CD8-positive, alpha-beta T cell (primary cell): ENCODE measurements at regions of chr7 and their contacts with region 1.

Region 1: GRCh38 chr7:23105644-23106056 is at the start of gene KLHL7:
- DNase-seq: peak; percentile 92 to 98 (median 96)
- ATAC-seq: peak; percentile 95
- H3K4me3 ChIP-seq: peak within 1 kb of the TSS; percentile 93 to 94
- H3K4me3 Mint-ChIP-seq: peak within 1 kb of the TSS; percentile 98
- H3K27ac ChIP-seq: peak within 1 kb of the TSS; percentile 97
- H3K27ac Mint-ChIP-seq: peak within 1 kb of the TSS; percentile 95
- H3K4me1 ChIP-seq: peaks cover 23% of the 10 kb centered on the region
- H3K4me1 Mint-ChIP-seq: peaks cover 49% of the 10 kb centered on the region
- H3K27me3 ChIP-seq: no peaks in the 10 kb centered on the region
- H3K27me3 Mint-ChIP-seq: no peaks in the 10 kb centered on the region
- CTCF ChIP-seq: no peak
- total RNA-seq, gene KLHL7: 19.2 to 20.2 TPM

Region 2: GRCh38 chr7:22822486-22823141 is 283.0 kb before region 1 on chr7 and contains the start of gene TOMM7:
- CTCF ChIA-PET with region 1: interaction called, 3 read pairs
- POLR2A ChIA-PET with region 1: interaction called, 3 read pairs
- intact Hi-C with region 1: loop called (anchors 1 to 2 kb)
- DNase-seq: peak; percentile 72 to 99 (median 86)
- ATAC-seq: peak; percentile 96
- H3K4me3 ChIP-seq: peak within 1 kb of the TSS; percentile 74 to 89
- H3K4me3 Mint-ChIP-seq: peak within 1 kb of the TSS; percentile 99
- H3K27ac ChIP-seq: peak within 1 kb of the TSS; percentile 85
- H3K27ac Mint-ChIP-seq: peak within 1 kb of the TSS; percentile 99
- H3K4me1 ChIP-seq: peaks cover 20% of the 10 kb centered on the region
- H3K4me1 Mint-ChIP-seq: peaks cover 41% of the 10 kb centered on the region
- H3K27me3 ChIP-seq: no peaks in the 10 kb centered on the region
- H3K27me3 Mint-ChIP-seq: peaks cover 4% of the 10 kb centered on the region
- CTCF ChIP-seq: no peak
- total RNA-seq, gene TOMM7: 595 to 610 TPM

Region 3: DNA sequence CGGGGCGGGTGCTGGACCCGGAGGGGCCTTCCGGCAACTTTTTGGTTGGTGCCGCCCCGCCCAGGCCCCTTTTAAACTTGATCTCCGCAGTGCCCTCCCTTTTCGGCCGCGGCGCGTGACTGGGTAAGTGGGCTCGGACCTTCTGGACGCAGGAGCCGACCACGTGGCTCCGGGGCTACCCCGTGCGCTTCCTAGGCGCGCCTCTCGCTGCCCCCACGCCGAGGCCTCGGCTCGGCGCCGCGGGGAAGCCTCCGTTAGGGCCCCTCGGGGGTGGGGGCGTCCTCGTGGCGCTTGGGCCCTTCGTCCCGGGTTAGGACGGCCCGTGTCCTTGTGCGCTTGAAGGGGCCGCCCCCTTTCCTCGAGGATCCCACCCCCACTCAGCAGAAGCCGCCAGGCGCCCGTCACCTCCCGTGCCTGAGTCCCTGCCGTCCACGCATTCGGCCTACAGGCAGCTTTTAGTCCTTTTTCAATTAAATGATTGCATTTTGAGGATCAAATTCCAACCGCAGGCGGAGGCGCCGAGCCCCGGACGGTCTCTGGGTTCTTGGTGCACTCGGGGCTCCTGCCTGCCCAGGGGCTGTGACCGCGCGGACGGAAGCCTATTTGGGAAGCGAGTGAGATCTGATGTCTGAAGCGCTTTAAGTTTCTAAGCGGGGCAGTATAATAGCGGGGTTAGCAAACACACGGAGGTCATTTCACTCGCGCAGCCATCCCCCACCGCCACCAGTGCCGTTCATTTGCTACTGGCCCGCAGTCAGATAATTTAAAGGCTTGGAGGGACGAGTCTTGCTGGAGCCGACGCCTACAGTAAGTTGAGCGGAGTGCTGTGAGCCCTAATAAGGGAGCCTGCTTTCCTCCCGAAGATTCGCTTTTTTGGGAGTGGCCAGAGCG is 251.2 kb before region 1 on chr7:
- CTCF ChIA-PET with region 1: no interaction called
- POLR2A ChIA-PET with region 1: interaction called, 3 read pairs
- intact Hi-C with region 1: loop called (anchors 1 to 2 kb)
- DNase-seq: peak in 8 of 9 experiments; percentile 58 to 89 (median 76)
- ATAC-seq: peak; percentile 79
- H3K4me3 ChIP-seq: peak overlapping the region; percentile 82 to 94
- H3K4me3 Mint-ChIP-seq: peak overlapping the region; percentile 93
- H3K27ac ChIP-seq: peak overlapping the region; percentile 64 to 81
- H3K27ac Mint-ChIP-seq: peak overlapping the region; percentile 93
- H3K4me1 ChIP-seq: peaks cover 11% of the 10 kb centered on the region
- H3K4me1 Mint-ChIP-seq: peaks cover 23% of the 10 kb centered on the region
- H3K27me3 ChIP-seq: no peaks in the 10 kb centered on the region
- H3K27me3 Mint-ChIP-seq: no peaks in the 10 kb centered on the region
- CTCF ChIP-seq: peak; percentile 65

Region 4: GRCh38 chr7:23181684-23182553 is 76.3 kb after region 1 on chr7 and contains the start of gene NUP42:
- CTCF ChIA-PET with region 1: interaction called, 5 read pairs
- POLR2A ChIA-PET with region 1: interaction called, 23 read pairs
- intact Hi-C with region 1: loop called (anchors 1 kb)
- DNase-seq: peak; percentile 89 to 98 (median 95)
- ATAC-seq: peak; percentile 90
- H3K4me3 ChIP-seq: peak within 1 kb of the TSS; percentile 77 to 84
- H3K4me3 Mint-ChIP-seq: peak within 1 kb of the TSS; percentile 100
- H3K27ac ChIP-seq: peak within 1 kb of the TSS; percentile 86 to 91
- H3K27ac Mint-ChIP-seq: peak within 1 kb of the TSS; percentile 100
- H3K4me1 ChIP-seq: peaks cover 30% of the 10 kb centered on the region
- H3K4me1 Mint-ChIP-seq: peaks cover 39% of the 10 kb centered on the region
- H3K27me3 ChIP-seq: no peaks in the 10 kb centered on the region
- H3K27me3 Mint-ChIP-seq: no peaks in the 10 kb centered on the region
- CTCF ChIP-seq: no peak
- total RNA-seq, gene NUP42: 17.3 to 20.4 TPM

Region 5: GRCh38 chr7:23261843-23262452 is 156.3 kb after region 1 on chr7:
- CTCF ChIA-PET with region 1: no interaction called
- POLR2A ChIA-PET with region 1: no interaction called
- intact Hi-C with region 1: loop called in 1 of 2 experiments (anchors 10 kb)
- DNase-seq: peak; percentile 19 to 74 (median 54)
- ATAC-seq: peak; percentile 97
- H3K4me3 ChIP-seq: no peak overlapping the region
- H3K4me3 Mint-ChIP-seq: no peak overlapping the region
- H3K27ac ChIP-seq: no peak overlapping the region
- H3K27ac Mint-ChIP-seq: no peak overlapping the region
- H3K4me1 ChIP-seq: no peaks in the 10 kb centered on the region
- H3K4me1 Mint-ChIP-seq: no peaks in the 10 kb centered on the region
- H3K27me3 ChIP-seq: no peaks in the 10 kb centered on the region
- H3K27me3 Mint-ChIP-seq: peaks cover 10% of the 10 kb centered on the region
- CTCF ChIP-seq: peak; percentile 78

Region 6: GRCh38 chr7:23474094-23474828 is 368.6 kb after region 1 on chr7:
- CTCF ChIA-PET with region 1: no interaction called
- POLR2A ChIA-PET with region 1: no interaction called
- intact Hi-C with region 1: loop called in 1 of 2 experiments (anchors 10 kb)
- DNase-seq: peak in 6 of 9 experiments; percentile 21 to 59 (median 41)
- ATAC-seq: no peak
- H3K4me3 ChIP-seq: no peak overlapping the region
- H3K4me3 Mint-ChIP-seq: no peak overlapping the region
- H3K27ac ChIP-seq: no peak overlapping the region
- H3K27ac Mint-ChIP-seq: no peak overlapping the region
- H3K4me1 ChIP-seq: peaks cover 30% of the 10 kb centered on the region
- H3K4me1 Mint-ChIP-seq: peaks cover 27% of the 10 kb centered on the region
- H3K27me3 ChIP-seq: peaks cover 72 to 84% of the 10 kb centered on the region in 2 experiments
- H3K27me3 Mint-ChIP-seq: peaks cover 65% of the 10 kb centered on the region
- CTCF ChIP-seq: no peak

Region 7: DNA sequence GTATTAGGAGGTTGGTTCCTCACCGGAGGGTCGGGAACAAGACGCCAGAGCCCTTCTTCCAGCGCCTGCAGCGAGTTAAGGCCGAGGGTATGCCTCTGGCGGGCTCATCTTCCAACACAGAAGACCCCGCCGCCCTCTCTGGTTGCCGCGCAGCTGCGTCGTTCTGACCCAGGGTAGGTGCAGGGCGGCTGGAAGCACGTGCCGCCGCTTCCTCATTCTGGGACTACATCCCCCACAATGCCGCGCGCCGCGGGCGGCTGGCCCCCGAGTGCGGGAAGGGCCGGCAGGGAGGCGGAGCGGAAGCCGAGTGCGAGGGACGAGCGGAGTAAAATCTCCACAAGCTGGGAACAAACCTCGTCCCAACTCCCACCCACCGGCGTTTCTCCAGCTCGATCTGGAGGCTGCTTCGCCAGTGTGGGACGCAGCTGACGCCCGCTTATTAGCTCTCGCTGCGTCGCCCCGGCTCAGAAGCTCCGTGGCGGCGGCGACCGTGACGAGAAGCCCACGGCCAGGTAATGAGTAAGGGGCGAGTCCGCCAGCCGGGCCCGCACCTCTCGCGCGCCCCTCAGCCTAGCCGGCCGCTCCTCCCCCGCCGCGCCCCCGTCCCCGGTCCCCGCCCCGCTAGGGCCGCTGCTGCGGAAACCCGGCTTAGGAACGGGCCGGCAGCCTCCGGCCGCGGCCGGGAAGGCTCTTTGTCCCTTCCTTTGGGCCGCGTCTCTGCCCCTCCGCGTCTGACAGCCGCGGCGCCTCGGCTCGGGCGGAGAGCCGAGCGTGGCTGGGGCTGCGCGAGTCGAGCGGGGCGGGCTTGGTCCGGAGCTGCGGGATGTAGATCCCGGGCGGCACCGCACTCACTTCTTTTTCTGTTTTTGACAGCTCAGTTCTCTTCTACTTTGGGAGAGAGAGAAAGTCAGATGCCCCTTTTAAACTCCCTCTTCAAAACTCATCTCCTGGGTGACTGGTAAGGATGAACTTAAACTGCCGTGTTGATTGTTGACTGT is 491.7 kb after region 1 on chr7 and contains the start of gene CCDC126:
- CTCF ChIA-PET with region 1: no interaction called
- POLR2A ChIA-PET with region 1: no interaction called
- intact Hi-C with region 1: loop called in 1 of 2 experiments (anchors 5 kb)
- DNase-seq: peak; percentile 57 to 88 (median 81)
- ATAC-seq: peak; percentile 89
- H3K4me3 ChIP-seq: peak within 1 kb of the TSS; percentile 81 to 91
- H3K4me3 Mint-ChIP-seq: peak within 1 kb of the TSS; percentile 85
- H3K27ac ChIP-seq: peak within 1 kb of the TSS; percentile 55 to 63
- H3K27ac Mint-ChIP-seq: peak within 1 kb of the TSS; percentile 49
- H3K4me1 ChIP-seq: peaks cover 21% of the 10 kb centered on the region
- H3K4me1 Mint-ChIP-seq: peaks cover 34% of the 10 kb centered on the region
- H3K27me3 ChIP-seq: no peaks in the 10 kb centered on the region
- H3K27me3 Mint-ChIP-seq: no peaks in the 10 kb centered on the region
- CTCF ChIP-seq: no peak
- total RNA-seq, gene CCDC126: 10.8 to 11.9 TPM

Region 8: DNA sequence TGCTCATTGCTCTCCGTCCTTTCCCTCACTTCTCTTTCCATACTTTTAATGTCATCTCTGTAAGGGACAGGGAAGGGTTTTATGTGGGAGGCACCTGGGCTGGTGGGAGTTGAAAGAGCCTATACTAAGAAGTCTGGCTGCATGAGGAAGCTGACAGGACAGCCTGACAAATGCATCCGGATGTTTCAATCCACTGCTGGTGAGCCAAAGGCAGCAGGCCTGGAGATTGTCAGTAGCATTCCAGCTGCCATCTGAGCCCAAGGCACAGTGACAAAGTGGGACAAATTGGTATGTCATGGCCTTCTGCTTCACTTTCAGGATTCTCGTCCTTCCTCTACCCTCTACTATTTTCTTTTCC is 822.7 kb after region 1 on chr7:
- CTCF ChIA-PET with region 1: no interaction called
- POLR2A ChIA-PET with region 1: no interaction called
- intact Hi-C with region 1: no loop called
- DNase-seq: no peak
- ATAC-seq: no peak
- H3K4me3 ChIP-seq: no peak overlapping the region
- H3K4me3 Mint-ChIP-seq: no peak overlapping the region
- H3K27ac ChIP-seq: no peak overlapping the region
- H3K27ac Mint-ChIP-seq: no peak overlapping the region
- H3K4me1 ChIP-seq: no peaks in the 10 kb centered on the region
- H3K4me1 Mint-ChIP-seq: no peaks in the 10 kb centered on the region
- H3K27me3 ChIP-seq: no peaks in the 10 kb centered on the region
- H3K27me3 Mint-ChIP-seq: peaks cover 7% of the 10 kb centered on the region
- CTCF ChIP-seq: no peak